MCF 10A (cell line): ENCODE measurements at regions of chr11 and their contacts with region 1.

Region 1: DNA sequence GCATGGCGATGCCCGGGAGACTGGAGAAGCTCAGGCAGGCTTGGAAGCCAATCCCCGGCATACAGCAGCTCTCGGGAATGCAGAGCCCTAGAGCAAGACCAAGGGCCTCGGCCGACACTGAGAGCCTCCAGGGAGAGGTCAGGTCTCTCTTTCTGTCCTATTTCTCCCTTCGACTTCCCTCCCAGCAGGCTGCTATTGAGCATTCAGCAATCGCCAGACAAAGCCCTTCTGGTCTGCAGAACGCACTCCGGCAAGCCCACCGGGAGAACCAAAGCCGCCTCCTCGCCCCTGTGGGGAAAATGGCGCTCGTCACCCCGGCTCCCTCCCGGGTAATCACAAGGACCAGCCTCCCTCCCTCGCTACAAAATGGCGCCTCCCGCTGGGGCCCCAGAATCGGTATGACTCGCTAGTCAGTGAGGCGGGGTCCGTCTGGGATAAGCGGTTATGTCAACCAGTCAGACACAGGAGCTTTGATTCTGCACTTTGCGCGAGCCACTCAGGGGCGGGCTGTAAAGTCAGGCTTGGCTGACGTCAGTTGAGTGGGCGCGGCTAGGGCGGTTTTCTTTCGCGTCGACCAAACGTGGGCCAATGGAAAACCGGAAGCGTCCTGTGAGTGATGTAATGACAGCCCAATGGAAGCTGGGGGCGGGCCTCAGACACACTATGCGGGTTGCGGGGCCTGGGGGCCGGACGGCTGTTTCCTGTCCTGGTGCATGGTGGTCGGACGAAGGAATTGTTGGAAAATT is at the start of gene ZNF143:
- DNase-seq: peak; percentile 100
- H3K4me3 Mint-ChIP-seq: peak within 1 kb of the TSS; percentile 88
- H3K27ac Mint-ChIP-seq: peak within 1 kb of the TSS; percentile 98
- H3K4me1 Mint-ChIP-seq: peaks cover 10% of the 10 kb centered on the region
- H3K27me3 Mint-ChIP-seq: no peaks in the 10 kb centered on the region
- CTCF ChIP-seq: no peak
- total RNA-seq, gene ZNF143: 19.0 and 25.2 TPM in 2 replicates

Region 2: GRCh38 chr11:9314291-9315036 is 146.0 kb before region 1 on chr11 and contains the start of gene TMEM41B:
- CTCF ChIA-PET with region 1: interaction called, 3 read pairs
- POLR2A ChIA-PET with region 1: interaction called, 42 read pairs
- intact Hi-C with region 1: no loop called
- DNase-seq: peak; percentile 99
- H3K4me3 Mint-ChIP-seq: peak within 1 kb of the TSS; percentile 99
- H3K27ac Mint-ChIP-seq: peak within 1 kb of the TSS; percentile 98
- H3K4me1 Mint-ChIP-seq: peaks cover 14% of the 10 kb centered on the region
- H3K27me3 Mint-ChIP-seq: no peaks in the 10 kb centered on the region
- CTCF ChIP-seq: no peak
- total RNA-seq, gene TMEM41B: 50.3 and 72.8 TPM in 2 replicates

Region 3: GRCh38 chr11:9438611-9439010 is 21.9 kb before region 1 on chr11:
- CTCF ChIA-PET with region 1: no interaction called
- POLR2A ChIA-PET with region 1: interaction called, 36 read pairs
- intact Hi-C with region 1: no loop called
- DNase-seq: no peak
- H3K4me3 Mint-ChIP-seq: no peak overlapping the region
- H3K27ac Mint-ChIP-seq: no peak overlapping the region
- H3K4me1 Mint-ChIP-seq: no peaks in the 10 kb centered on the region
- H3K27me3 Mint-ChIP-seq: no peaks in the 10 kb centered on the region
- CTCF ChIP-seq: no peak

Region 4: DNA sequence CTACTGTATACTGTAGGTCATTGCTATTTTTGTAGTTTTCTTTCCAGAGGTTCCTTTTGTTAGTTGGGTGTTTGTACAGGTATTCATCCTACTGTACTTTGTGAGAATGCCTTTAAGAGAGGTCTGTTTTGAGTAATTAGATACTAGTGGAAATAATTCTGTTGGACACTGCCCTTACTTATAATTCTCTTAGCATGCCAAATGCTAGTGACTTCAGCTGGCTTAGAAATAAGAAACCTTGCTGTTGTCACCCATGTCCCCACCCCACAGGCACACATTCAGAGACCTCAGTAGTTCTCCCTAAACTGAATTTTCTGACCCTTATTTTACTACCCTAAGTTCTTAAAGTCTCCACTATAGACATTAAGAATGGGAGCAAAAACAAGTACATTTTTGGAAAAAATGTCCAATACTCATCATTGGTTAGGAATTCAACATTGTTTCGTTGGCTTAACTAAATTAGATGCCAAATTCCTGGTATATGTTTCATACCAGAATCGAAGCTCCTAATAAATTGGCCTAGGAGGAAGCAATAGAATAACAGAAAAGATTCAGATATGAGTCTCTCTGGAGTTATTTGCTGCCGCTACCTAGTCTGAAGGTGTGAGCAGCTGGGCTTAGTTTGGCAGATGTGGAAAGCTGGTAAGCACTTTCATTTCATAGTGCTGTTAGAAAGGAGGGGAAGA is 28.7 kb after region 1 on chr11:
- CTCF ChIA-PET with region 1: no interaction called
- POLR2A ChIA-PET with region 1: interaction called, 10 read pairs
- intact Hi-C with region 1: no loop called
- DNase-seq: no peak
- H3K4me3 Mint-ChIP-seq: no peak overlapping the region
- H3K27ac Mint-ChIP-seq: peak overlapping the region; percentile 76
- H3K4me1 Mint-ChIP-seq: peaks cover 9% of the 10 kb centered on the region
- H3K27me3 Mint-ChIP-seq: no peaks in the 10 kb centered on the region
- CTCF ChIP-seq: no peak

Region 5: DNA sequence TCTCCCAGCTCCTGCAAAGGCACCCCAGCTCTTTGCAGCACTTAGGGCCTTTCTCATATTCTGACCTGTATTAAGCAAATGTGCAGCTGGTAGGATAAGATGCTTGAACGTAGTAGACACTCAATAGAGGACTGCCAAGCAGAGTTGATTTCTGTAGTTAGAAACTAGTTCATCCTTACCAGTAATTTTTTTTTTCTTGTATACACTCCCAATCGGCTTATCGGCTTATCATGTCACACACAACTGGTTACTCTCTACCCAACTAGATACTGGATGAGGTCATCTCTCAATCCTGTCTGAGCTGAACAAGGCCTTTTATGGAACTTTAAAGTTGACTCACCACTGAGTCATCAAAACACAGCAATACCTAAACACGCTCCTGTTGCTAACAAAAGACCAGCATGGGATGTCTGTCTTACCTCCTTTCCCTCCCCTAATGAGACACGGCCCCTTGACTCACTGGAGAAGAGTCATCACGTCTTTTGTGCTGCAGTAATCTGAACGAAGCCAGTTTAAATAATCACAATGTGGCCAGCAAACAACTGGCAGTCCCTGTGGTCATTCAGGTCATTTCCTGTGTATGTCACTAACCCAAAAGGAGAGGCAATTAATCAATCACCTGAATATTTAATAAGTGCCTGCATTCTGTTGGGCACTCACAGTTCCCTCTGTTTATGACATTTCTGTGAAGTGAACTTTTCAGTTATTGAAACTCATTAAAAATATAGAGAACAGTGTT is 105.5 kb after region 1 on chr11:
- CTCF ChIA-PET with region 1: interaction called, 4 read pairs
- POLR2A ChIA-PET with region 1: interaction called, 46 read pairs
- intact Hi-C with region 1: loop called (anchors 1 kb)
- DNase-seq: peak; percentile 99
- H3K4me3 Mint-ChIP-seq: no peak overlapping the region
- H3K27ac Mint-ChIP-seq: peak overlapping the region; percentile 100
- H3K4me1 Mint-ChIP-seq: peaks cover 43% of the 10 kb centered on the region
- H3K27me3 Mint-ChIP-seq: no peaks in the 10 kb centered on the region
- CTCF ChIP-seq: no peak

Region 6: DNA sequence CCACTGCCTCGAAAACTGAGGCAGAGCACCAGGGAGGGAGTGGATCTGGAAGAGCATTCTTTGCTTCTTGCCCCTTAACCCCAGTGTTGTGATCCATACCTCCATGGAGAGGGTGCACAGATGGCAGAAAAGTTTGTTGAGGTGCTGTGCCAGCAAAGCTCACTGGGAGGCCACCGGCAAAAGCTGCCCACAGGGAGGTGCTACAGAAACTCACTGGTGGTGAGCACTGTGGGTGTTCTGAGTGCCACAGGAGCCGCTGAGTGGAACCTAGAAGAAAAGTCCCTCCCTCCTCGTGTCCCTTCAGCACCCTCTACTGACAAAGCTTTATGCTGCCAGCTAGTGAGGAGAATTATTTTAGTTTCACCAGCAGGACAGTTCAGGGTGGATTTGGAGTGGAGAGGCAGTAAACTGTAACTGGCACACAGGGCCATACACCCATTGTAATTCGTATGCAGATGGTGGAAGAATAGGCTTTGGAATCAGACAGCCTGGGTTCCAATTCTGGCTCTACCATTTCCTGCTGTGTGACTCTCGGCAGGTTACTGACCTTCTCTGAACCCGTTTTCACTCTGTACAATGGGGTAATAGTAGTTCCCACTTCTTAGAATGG is 288.0 kb after region 1 on chr11:
- CTCF ChIA-PET with region 1: interaction called, 3 read pairs
- POLR2A ChIA-PET with region 1: interaction called, 13 read pairs
- intact Hi-C with region 1: no loop called
- DNase-seq: peak; percentile 75
- H3K4me3 Mint-ChIP-seq: no peak overlapping the region
- H3K27ac Mint-ChIP-seq: no peak overlapping the region
- H3K4me1 Mint-ChIP-seq: peaks cover 6% of the 10 kb centered on the region
- H3K27me3 Mint-ChIP-seq: no peaks in the 10 kb centered on the region
- CTCF ChIP-seq: peak; percentile 90